IMR-90 (cell line): ENCODE measurements at regions of chr2 and their contacts with region 1.

Region 1: DNA sequence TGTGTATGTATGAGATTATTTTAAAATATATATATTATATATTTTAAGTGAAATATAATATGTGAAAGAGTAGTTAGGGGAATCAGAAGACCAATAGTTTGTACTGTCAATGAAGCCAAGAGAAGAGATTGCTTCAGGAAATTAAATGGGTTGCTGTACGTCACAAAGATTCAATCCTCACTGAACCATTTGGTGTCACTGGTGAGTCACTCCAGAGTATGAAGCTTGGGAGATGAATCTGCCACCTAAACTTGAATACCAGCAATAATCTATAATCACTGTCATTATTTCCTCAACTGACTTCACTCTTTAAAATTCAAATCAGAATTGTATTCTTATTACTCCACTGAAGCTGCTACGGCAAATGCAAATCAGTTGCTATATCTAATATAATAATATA is 41.9 kb upstream of the SCN9A start:
- DNase-seq: peak; percentile 65
- ATAC-seq: no peak; the same call in 1 of the 2 replicates
- H3K4me3 ChIP-seq: no peak overlapping the region
- H3K27ac ChIP-seq: no peak overlapping the region
- H3K4me1 ChIP-seq: no peaks in the 10 kb centered on the region
- H3K27me3 ChIP-seq: no peaks in the 10 kb centered on the region
- CTCF ChIP-seq: no peak; the same call in 1 of the 2 replicates
- POLR2A ChIP-seq: no peak
- RAD21 ChIP-seq: 0 out of 2 replicates have a peak, but pooled peaks have one; percentile 4

Region 2: DNA sequence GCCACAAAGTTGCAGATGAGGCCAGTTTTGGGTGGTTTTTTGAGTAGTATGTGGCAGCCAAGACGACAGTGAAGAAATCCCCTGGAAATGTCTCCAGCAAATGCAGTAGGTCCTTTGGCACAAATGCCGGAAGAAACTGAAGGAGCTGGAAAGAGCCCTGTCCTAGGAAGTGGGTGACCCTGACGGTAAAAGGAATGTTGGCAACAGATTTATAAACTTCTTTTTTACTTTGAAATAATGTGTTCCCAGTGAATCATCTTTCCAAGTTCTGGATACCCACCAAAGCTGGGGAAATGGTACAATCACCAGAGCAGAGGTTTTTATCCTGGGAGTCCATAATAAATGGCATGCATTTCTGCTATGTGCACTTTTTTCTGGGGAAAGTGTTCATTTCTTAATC is 835.3 kb before region 1 on chr2:
- CTCF ChIA-PET with region 1: no interaction called
- POLR2A ChIA-PET with region 1: no interaction called
- dilution Hi-C with region 1: no loop called
- in situ Hi-C with region 1: no loop called
- intact Hi-C with region 1: no loop called
- DNase-seq: no peak
- ATAC-seq: no peak
- H3K4me3 ChIP-seq: no peak overlapping the region
- H3K27ac ChIP-seq: no peak overlapping the region
- H3K4me1 ChIP-seq: no peaks in the 10 kb centered on the region
- H3K27me3 ChIP-seq: no peaks in the 10 kb centered on the region
- CTCF ChIP-seq: no peak
- POLR2A ChIP-seq: no peak
- RAD21 ChIP-seq: no peak

Region 3: DNA sequence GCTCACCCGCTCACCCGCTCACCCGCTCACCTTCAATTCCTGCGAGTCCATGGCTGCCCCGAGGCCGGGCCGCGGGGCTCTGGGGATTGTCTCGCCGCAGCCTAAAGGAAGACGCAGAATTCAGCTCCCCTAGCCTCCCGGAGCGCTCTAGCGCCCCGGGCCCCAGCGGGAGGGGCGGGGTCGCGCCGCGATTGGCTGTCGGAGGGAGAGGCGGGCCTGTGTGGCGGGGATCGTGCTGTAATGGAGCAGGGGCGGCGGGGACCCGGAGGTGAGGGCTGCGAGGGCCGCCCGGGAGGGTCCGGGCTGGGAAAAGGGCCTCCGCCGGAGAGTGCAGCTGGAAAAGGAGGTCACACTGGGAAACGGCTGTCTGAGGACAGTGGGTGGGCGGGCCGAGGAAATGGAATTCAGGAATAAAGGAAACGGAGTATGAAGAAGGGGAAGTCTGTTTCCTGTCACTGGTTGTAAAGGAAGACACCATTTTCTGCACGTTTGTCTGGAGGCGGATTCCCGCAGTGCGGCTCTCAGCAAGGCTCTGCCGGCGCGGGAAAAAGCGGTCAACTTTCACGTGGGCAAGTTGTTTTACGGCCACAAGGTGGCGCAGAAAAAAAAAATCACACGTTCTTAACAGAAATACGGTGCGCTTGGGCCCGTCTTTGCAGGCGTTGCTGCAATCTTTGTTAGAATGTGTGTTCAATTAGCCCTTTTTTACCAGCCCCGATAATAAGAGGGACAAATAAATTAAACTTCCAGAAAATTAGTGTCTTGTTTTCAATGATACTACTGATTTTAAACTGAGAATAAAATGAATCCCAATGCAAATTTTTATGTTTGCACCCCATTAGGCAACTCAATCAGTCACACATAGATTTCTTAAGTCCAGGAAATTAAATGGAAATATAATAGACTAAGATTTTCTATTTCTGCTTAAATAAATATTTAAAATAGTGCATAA is 463.7 kb before region 1 on chr2 and contains the start of gene TTC21B:
- CTCF ChIA-PET with region 1: no interaction called
- POLR2A ChIA-PET with region 1: no interaction called
- dilution Hi-C with region 1: no loop called
- in situ Hi-C with region 1: loop called (anchors 25 kb)
- intact Hi-C with region 1: loop called (anchors 5 kb)
- DNase-seq: peak; percentile 95
- ATAC-seq: peak; percentile 99
- H3K4me3 ChIP-seq: peak within 1 kb of the TSS; percentile 64
- H3K27ac ChIP-seq: peak within 1 kb of the TSS; percentile 45
- H3K4me1 ChIP-seq: no peaks in the 10 kb centered on the region
- H3K27me3 ChIP-seq: no peaks in the 10 kb centered on the region
- CTCF ChIP-seq: peak; percentile 84
- POLR2A ChIP-seq: peak; percentile 81
- RAD21 ChIP-seq: peak; percentile 54
- total RNA-seq, gene TTC21B: 17.2 and 23.1 TPM in 2 replicates

Region 4: DNA sequence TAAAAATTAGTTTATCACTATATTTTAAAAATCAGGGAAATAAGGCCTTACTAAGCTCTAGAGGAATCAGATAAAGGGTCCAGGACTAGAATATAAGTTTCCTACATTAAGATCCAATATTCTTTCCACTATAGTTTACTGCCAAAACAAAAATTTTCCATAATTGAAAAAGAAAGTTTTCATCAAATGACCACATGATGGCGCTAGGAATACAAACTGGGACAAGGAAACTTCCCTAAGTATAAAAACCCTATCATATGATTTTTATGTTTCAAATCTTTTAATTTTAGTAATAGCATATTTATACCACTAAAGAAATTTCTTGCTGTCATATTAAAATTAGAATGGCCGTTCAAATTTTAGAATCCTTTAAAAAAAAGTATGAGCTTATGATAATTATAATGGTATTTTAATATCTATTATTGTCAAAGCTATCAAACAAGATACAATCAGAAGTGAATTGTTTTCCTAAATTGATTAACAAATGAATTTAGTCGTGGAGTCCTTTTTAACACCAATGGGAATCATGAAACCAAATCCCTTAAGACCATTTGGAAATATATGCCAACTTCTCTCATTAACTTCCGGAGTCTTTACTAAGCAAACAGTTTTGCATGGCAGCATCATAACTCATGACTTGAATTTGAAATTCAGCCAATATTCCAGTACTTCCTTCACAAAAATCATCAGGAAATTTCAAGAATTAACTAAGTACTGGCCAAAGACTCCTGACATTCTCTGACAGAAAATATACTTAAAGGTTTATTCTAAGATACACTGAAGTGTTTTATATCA is 360.1 kb before region 1 on chr2:
- CTCF ChIA-PET with region 1: no interaction called
- POLR2A ChIA-PET with region 1: no interaction called
- dilution Hi-C with region 1: no loop called
- in situ Hi-C with region 1: no loop called
- intact Hi-C with region 1: loop called (anchors 2 kb)
- DNase-seq: peak; percentile 45
- ATAC-seq: peak; percentile 44; the same call in 1 of the 2 replicates
- H3K4me3 ChIP-seq: no peak overlapping the region
- H3K27ac ChIP-seq: no peak overlapping the region
- H3K4me1 ChIP-seq: no peaks in the 10 kb centered on the region
- H3K27me3 ChIP-seq: no peaks in the 10 kb centered on the region
- CTCF ChIP-seq: peak; percentile 66
- POLR2A ChIP-seq: no peak
- RAD21 ChIP-seq: peak; percentile 68